ENCODE measurements at regions of chr6 and their contacts with region 1.

Region 1: GRCh38 chr6:28188111-28188979 is 36.7 kb upstream of the ZSCAN9 start:
- DNase-seq: no peak
- H3K4me3 Mint-ChIP-seq: no peak overlapping the region
- H3K27ac Mint-ChIP-seq: no peak overlapping the region
- H3K4me1 Mint-ChIP-seq: no peaks in the 10 kb centered on the region
- H3K27me3 Mint-ChIP-seq: no peaks in the 10 kb centered on the region
- CTCF ChIP-seq: no peak

Region 2: DNA sequence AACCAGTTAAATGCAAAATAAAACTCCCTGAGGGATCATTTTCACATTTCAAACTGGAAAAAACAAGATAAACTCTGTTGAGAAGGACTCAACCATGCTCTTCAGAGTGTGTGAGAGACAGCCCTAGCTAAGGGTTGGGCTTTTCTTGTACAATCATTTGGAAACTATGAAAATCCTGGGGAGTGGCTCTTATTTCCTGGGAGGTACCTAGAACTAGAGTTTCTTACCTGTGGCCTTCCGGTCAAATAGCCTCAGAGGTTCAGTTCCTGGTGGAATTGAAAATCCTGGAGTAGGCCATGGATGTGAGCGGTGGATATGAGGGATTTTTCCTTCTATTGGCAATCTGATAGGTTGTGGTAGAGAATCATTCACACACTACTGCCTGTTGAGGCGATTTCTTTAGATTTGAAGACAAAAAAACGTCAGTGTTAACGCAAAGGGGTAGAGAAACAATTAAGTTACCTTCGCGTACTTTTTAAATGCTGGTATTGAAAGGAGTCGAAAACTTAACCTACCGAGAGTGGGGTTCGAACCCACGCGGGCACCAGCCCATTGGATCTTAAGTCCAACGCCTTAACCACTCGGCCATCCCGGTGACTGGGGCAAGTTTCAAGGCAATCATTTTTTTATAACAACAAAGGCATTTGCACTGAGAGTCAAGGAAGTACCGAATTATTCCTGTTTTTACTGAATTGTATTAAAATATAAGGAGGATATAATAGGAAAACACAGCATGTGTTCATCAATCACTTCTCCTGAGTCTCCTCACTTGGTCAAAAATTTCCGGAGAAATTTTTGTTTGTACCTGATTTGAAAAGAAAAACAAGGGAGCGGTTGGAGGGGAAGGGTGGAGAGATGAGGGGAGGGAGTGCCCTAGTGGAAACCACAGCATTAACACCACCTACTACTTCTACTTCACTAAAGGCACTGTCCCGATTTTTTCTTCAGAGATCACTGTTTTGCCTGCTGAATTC is 467.5 kb before region 1 on chr6:
- CTCF ChIA-PET with region 1: no interaction called
- intact Hi-C with region 1: no loop called
- DNase-seq: no peak
- H3K4me3 Mint-ChIP-seq: no peak overlapping the region
- H3K27ac Mint-ChIP-seq: no peak overlapping the region
- H3K4me1 Mint-ChIP-seq: peaks cover 6% of the 10 kb centered on the region
- H3K27me3 Mint-ChIP-seq: no peaks in the 10 kb centered on the region
- CTCF ChIP-seq: no peak

Region 3: DNA sequence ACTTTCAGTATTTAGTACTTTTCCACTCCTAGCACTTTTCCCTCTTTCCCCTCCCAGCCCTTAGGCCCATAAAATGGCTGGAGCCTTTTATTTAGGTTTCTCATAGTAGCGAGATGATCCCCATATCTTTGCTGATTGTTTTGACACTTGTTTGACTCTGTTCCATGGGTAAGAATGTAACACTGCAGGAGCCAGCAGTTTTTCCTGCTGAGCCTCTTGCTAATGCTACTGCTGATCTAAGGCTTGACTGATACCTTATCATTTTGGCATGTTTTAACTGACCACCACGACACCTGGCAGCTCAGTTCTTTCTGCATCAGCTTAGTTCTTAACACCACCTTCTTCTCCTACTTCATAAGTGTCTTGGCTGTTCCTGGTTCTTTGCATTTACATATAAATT is 17.1 kb before region 1 on chr6:
- CTCF ChIA-PET with region 1: no interaction called
- intact Hi-C with region 1: no loop called
- DNase-seq: no peak
- H3K4me3 Mint-ChIP-seq: no peak overlapping the region
- H3K27ac Mint-ChIP-seq: no peak overlapping the region
- H3K4me1 Mint-ChIP-seq: no peaks in the 10 kb centered on the region
- H3K27me3 Mint-ChIP-seq: no peaks in the 10 kb centered on the region
- CTCF ChIP-seq: no peak

Region 4: GRCh38 chr6:28225056-28225834 is 36.9 kb after region 1 on chr6 and contains the start of gene ZSCAN9:
- CTCF ChIA-PET with region 1: no interaction called
- intact Hi-C with region 1: loop called (anchors 1 kb)
- DNase-seq: peak; percentile 90
- H3K4me3 Mint-ChIP-seq: peak within 1 kb of the TSS; percentile 93
- H3K27ac Mint-ChIP-seq: peak within 1 kb of the TSS; percentile 73
- H3K4me1 Mint-ChIP-seq: no peaks in the 10 kb centered on the region
- H3K27me3 Mint-ChIP-seq: no peaks in the 10 kb centered on the region
- CTCF ChIP-seq: no peak
- total RNA-seq, gene ZSCAN9: 24.6 and 25.8 TPM in 2 replicates

Region 5: DNA sequence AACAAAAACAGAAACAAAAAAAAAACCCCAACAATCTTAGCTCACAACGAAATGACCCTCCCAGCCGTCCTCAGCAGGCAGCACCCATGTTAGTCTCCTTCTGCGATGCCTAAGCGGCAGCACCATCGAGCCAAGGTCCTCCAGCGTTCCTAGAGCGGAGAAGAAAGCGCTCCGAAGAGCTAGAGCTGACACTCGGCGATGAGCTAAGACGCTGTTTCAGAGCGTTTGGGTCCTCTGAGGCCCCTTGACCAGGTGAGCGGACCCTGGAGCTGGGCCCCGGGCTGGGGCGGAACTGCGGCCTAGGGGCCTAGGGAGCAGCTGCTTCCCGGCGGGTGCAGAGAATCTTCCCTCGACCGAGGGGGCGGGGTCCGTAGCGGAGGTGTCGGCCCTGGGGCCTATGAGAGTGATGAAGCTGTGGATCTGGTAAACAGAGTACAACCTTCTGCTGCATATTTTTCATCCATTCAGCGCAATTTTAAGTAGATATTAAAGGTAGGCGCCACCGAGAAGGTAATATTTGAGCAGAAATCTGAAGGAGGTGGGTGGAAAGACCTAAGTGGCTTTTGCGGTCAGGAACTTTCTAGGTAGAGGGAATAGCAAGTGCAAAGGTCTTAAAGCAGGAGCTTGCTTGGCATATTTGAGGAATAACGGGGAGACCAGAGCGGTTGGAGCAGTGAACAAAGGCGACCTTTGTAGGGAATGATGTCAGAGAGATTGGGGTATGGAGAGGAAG is 78.8 kb after region 1 on chr6 and contains the start of gene ZSCAN26:
- CTCF ChIA-PET with region 1: no interaction called
- intact Hi-C with region 1: no loop called
- DNase-seq: peak; percentile 89
- H3K4me3 Mint-ChIP-seq: no peak within 1 kb of the TSS
- H3K27ac Mint-ChIP-seq: no peak within 1 kb of the TSS
- H3K4me1 Mint-ChIP-seq: no peaks in the 10 kb centered on the region
- H3K27me3 Mint-ChIP-seq: no peaks in the 10 kb centered on the region
- CTCF ChIP-seq: no peak
- total RNA-seq, gene ZSCAN26: 13.1 and 14.2 TPM in 2 replicates

Region 6: GRCh38 chr6:28586962-28587745 is 398.8 kb after region 1 on chr6:
- CTCF ChIA-PET with region 1: no interaction called
- intact Hi-C with region 1: no loop called
- DNase-seq: peak; percentile 84
- H3K4me3 Mint-ChIP-seq: peak overlapping the region; percentile 91
- H3K27ac Mint-ChIP-seq: peak overlapping the region; percentile 89
- H3K4me1 Mint-ChIP-seq: peaks cover 39% of the 10 kb centered on the region
- H3K27me3 Mint-ChIP-seq: no peaks in the 10 kb centered on the region
- CTCF ChIP-seq: no peak